Common myeloid progenitor, CD34-positive (primary cell): ENCODE measurements at regions of chr10 and their contacts with region 1.

Region 1: GRCh38 chr10:91298224-91298871 is 77.9 kb downstream of the PCGF5 start:
- DNase-seq: peak; percentile 78 to 94 (median 91)
- H3K4me3 ChIP-seq: peak overlapping the region in 6 of 7 experiments; percentile 9 to 79 (median 58)
- H3K27ac ChIP-seq: no peak overlapping the region
- H3K4me1 ChIP-seq: peaks cover 2 to 13% (median 9%) of the 10 kb centered on the region in 4 experiments
- H3K27me3 ChIP-seq: peaks cover 0 to 3% (median 2%) of the 10 kb centered on the region in 5 experiments

Region 2: DNA sequence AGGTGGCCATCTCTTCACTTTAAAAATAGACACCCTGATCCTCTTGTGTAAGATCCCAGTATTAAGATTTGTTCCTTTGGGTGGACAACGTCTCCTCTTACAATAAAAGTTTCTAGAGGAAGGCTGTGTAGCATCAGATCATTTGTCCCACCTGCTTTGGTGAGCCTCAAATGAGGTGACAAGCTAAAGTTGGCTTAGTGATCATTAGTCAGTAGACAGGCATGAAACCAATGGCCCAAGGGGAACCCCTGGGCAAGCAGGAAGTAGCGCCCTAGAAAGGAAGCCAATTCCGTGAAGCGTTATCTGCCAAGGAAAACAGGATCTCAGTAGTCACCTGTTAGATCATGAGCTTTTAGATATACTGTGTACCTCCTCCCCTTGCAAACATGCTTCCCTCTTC is 11.1 kb before region 1 on chr10:
- CTCF ChIA-PET with region 1: interaction called, 14 read pairs
- POLR2A ChIA-PET with region 1: no interaction called
- DNase-seq: no peak
- H3K4me3 ChIP-seq: no peak overlapping the region
- H3K27ac ChIP-seq: no peak overlapping the region
- H3K4me1 ChIP-seq: no peaks in the 10 kb centered on the region
- H3K27me3 ChIP-seq: no peaks in the 10 kb centered on the region

Region 3: GRCh38 chr10:91309711-91310110 is 11.4 kb after region 1 on chr10:
- CTCF ChIA-PET with region 1: interaction called, 15 read pairs
- POLR2A ChIA-PET with region 1: interaction called, 5 read pairs
- DNase-seq: no peak
- H3K4me3 ChIP-seq: no peak overlapping the region
- H3K27ac ChIP-seq: no peak overlapping the region
- H3K4me1 ChIP-seq: no peaks in the 10 kb centered on the region
- H3K27me3 ChIP-seq: peaks cover 0 to 9% (median 0%) of the 10 kb centered on the region in 5 experiments

Region 4: GRCh38 chr10:91378061-91378460 is 79.7 kb after region 1 on chr10:
- CTCF ChIA-PET with region 1: interaction called, 10 read pairs
- POLR2A ChIA-PET with region 1: no interaction called
- DNase-seq: peak; percentile 63 to 80 (median 79)
- H3K4me3 ChIP-seq: no peak overlapping the region
- H3K27ac ChIP-seq: no peak overlapping the region
- H3K4me1 ChIP-seq: peaks cover 0 to 17% (median 1%) of the 10 kb centered on the region in 4 experiments
- H3K27me3 ChIP-seq: peaks cover 0 to 42% (median 4%) of the 10 kb centered on the region in 5 experiments

Region 5: GRCh38 chr10:91420868-91421267 is 122.5 kb after region 1 on chr10:
- CTCF ChIA-PET with region 1: no interaction called
- POLR2A ChIA-PET with region 1: no interaction called
- DNase-seq: peak in 2 of 3 donors; percentile 26 to 37
- H3K4me3 ChIP-seq: no peak overlapping the region
- H3K27ac ChIP-seq: no peak overlapping the region
- H3K4me1 ChIP-seq: peaks cover 0 to 1% (median 0%) of the 10 kb centered on the region in 4 experiments
- H3K27me3 ChIP-seq: peaks cover 0 to 2% (median 0%) of the 10 kb centered on the region in 5 experiments

Region 6: DNA sequence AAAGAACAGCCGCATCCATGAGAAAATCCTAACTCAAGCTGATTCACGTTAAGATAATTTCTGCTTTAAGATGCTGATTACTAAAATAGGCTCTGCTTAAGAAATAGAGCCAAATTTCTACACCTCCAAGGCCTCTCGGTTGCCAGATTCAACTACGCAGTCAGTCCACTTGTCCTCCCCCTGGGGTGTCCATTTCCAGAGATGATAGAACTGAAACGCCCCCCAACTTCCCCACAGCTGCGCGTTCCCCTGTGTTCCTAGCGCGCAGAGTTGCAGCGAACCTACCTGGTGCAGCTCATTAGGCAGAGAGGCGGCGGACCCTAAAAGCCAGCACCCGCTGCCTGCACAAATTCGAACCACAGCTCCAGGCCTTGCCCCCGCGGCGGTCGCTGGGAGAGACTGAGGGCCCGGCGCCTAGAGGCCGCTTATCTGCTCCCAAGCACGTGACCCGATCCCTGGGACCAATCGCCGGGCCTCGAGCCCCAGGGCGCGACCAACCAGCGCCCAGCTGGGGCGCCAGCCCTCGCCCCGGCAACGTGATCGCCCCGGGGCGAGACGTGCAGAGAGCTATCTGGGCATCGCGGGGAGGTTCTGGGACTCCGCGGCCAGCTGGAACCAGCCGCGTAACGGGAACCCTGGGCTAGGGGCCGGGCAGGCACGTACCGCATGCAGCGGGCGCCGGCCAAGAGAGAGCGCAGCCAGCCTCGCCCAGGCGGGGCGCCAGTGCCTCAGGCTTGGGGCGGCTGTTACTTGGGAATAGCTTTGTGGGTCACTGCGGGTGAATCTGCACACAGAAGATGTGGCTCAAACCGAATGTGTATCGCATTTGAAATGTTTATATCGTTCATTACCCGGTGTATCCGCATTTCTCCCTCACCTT is 334.6 kb after region 1 on chr10 and contains the start of gene PPP1R3C:
- CTCF ChIA-PET with region 1: interaction called, 53 read pairs
- POLR2A ChIA-PET with region 1: no interaction called
- DNase-seq: peak; percentile 34 to 67 (median 52)
- H3K4me3 ChIP-seq: peak within 1 kb of the TSS; percentile 0 to 65 (median 55)
- H3K27ac ChIP-seq: no peak within 1 kb of the TSS
- H3K4me1 ChIP-seq: peaks cover 0 to 13% (median 12%) of the 10 kb centered on the region in 4 experiments
- H3K27me3 ChIP-seq: peaks cover 19 to 51% (median 22%) of the 10 kb centered on the region in 5 experiments

Region 7: GRCh38 chr10:91694170-91694794 is 395.9 kb after region 1 on chr10:
- CTCF ChIA-PET with region 1: interaction called, 13 read pairs
- POLR2A ChIA-PET with region 1: no interaction called
- DNase-seq: peak; percentile 13 to 42 (median 33)
- H3K4me3 ChIP-seq: no peak overlapping the region
- H3K27ac ChIP-seq: no peak overlapping the region
- H3K4me1 ChIP-seq: peaks cover 0 to 4% (median 0%) of the 10 kb centered on the region in 4 experiments
- H3K27me3 ChIP-seq: no peaks in the 10 kb centered on the region